ENCODE measurements at regions of chr10 and their contacts with region 1.

Region 1: GRCh38 chr10:71812016-71812912 is 38.8 kb downstream of the PSAP start:
- DNase-seq: peak; percentile 88
- ATAC-seq: peak; percentile 98
- H3K4me3 Mint-ChIP-seq: no peak overlapping the region
- H3K27ac Mint-ChIP-seq: no peak overlapping the region
- H3K4me1 Mint-ChIP-seq: peaks cover 2% of the 10 kb centered on the region
- H3K27me3 Mint-ChIP-seq: no peaks in the 10 kb centered on the region

Region 2: GRCh38 chr10:71314028-71314693 is 498.1 kb before region 1 on chr10:
- CTCF ChIA-PET with region 1: no interaction called
- POLR2A ChIA-PET with region 1: no interaction called
- intact Hi-C with region 1: loop called (anchors 1 to 5 kb)
- DNase-seq: peak; percentile 71
- ATAC-seq: peak; percentile 24
- H3K4me3 Mint-ChIP-seq: no peak overlapping the region
- H3K27ac Mint-ChIP-seq: no peak overlapping the region
- H3K4me1 Mint-ChIP-seq: peaks cover 18% of the 10 kb centered on the region
- H3K27me3 Mint-ChIP-seq: peaks cover 7% of the 10 kb centered on the region

Region 3: GRCh38 chr10:71396084-71396720 is 416.1 kb before region 1 on chr10:
- CTCF ChIA-PET with region 1: interaction called, 4 read pairs
- POLR2A ChIA-PET with region 1: no interaction called
- intact Hi-C with region 1: loop called (anchors 1 to 5 kb)
- DNase-seq: peak; percentile 67
- ATAC-seq: peak; percentile 88
- H3K4me3 Mint-ChIP-seq: no peak overlapping the region
- H3K27ac Mint-ChIP-seq: no peak overlapping the region
- H3K4me1 Mint-ChIP-seq: peaks cover 8% of the 10 kb centered on the region
- H3K27me3 Mint-ChIP-seq: peaks cover 51% of the 10 kb centered on the region

Region 4: GRCh38 chr10:71666639-71667386 is 145.5 kb before region 1 on chr10:
- CTCF ChIA-PET with region 1: interaction called, 5 read pairs
- POLR2A ChIA-PET with region 1: no interaction called
- intact Hi-C with region 1: loop called in 1 of 2 experiments (anchors 1 kb)
- DNase-seq: peak; percentile 12
- ATAC-seq: peak; percentile 42
- H3K4me3 Mint-ChIP-seq: no peak overlapping the region
- H3K27ac Mint-ChIP-seq: no peak overlapping the region
- H3K4me1 Mint-ChIP-seq: peaks cover 12% of the 10 kb centered on the region
- H3K27me3 Mint-ChIP-seq: no peaks in the 10 kb centered on the region

Region 5: DNA sequence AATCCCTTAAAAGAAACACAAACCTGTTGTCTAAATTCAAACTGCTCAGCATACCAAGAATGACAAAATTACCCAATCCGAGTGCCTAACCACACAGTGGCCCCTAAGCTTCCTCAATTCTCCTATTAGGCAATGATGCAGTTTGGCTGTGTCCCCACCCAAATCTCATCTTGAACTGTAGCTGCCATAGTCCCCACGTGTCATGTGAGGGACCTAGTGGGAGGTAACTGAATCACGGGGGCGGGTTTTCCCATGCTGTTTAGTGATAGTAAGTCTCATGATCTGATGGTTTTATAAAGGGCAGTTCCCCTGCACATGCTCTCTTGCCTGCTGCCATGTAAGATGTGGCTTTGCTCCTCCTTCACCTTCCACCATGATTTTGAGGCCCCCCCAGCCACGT is 16.9 kb after region 1 on chr10:
- CTCF ChIA-PET with region 1: interaction called, 5 read pairs
- POLR2A ChIA-PET with region 1: interaction called, 11 read pairs
- intact Hi-C with region 1: no loop called
- DNase-seq: no peak
- ATAC-seq: no peak
- H3K4me3 Mint-ChIP-seq: no peak overlapping the region
- H3K27ac Mint-ChIP-seq: peak overlapping the region; percentile 25
- H3K4me1 Mint-ChIP-seq: peaks cover 5% of the 10 kb centered on the region
- H3K27me3 Mint-ChIP-seq: no peaks in the 10 kb centered on the region